PC-9 (cell line): ENCODE measurements at regions of chr12 and their contacts with region 1.

Region 1: GRCh38 chr12:124036674-124037109 is 63.7 kb downstream of the ZNF664 start:
- DNase-seq: peak in 1 of 2 experiments; percentile 37
- H3K4me3 ChIP-seq: no peak overlapping the region
- H3K27ac ChIP-seq: no peak overlapping the region
- H3K4me1 ChIP-seq: no peaks in the 10 kb centered on the region
- H3K27me3 ChIP-seq: no peaks in the 10 kb centered on the region
- CTCF ChIP-seq: peak; percentile 91

Region 2: DNA sequence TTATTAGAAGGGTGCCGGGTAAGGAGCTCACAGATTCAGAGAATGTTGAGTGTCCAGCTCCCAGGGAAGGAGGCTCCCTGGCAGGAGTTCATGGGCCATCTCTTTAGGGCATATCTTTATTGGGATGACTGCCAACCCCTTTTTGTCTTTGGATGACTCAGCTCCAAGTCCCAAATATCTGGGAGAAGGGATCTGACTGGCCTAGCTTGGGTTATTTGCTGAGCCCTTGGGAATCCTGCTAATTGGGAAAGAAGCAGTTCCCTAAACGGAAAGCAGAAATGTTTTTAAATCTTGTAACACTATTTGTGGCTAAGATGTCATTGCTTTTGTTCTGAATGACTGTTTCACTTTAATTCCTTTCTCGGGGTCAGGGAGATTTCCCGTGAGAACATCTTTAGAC is 422.2 kb before region 1 on chr12:
- CTCF ChIA-PET with region 1: no interaction called
- POLR2A ChIA-PET with region 1: no interaction called
- intact Hi-C with region 1: no loop called
- DNase-seq: no peak
- H3K4me3 ChIP-seq: no peak overlapping the region
- H3K27ac ChIP-seq: no peak overlapping the region
- H3K4me1 ChIP-seq: no peaks in the 10 kb centered on the region
- H3K27me3 ChIP-seq: no peaks in the 10 kb centered on the region
- CTCF ChIP-seq: no peak

Region 3: DNA sequence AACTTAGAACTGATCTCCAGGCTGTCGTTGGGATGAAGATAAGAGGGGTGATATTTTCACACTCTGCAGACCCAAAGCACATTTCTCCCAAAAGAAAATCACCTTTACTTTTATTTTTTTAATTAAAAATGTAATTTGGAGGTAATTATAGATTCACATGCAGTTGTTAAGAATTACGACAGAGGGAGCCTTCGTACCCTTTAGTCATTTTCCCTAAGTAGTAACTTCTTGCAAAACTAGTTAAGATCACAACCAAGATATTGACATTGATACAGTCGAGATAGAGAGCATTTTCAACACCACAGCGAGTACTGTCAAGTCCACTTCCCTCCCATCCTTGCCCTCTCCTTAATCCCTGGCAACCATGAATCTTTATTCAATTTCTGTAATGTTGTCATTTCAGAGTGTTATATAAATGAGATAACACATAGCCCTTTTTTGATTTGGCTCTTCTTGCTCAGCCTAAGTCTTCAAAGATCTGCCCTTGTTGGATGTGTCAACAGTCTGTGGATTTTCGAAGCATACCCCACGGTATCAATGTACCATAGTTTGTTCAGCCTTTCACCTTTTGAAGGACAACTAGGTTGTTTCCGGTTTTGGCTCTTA is 235.0 kb before region 1 on chr12:
- CTCF ChIA-PET with region 1: no interaction called
- POLR2A ChIA-PET with region 1: no interaction called
- intact Hi-C with region 1: loop called (anchors 2 kb)
- DNase-seq: peak in 1 of 2 experiments; percentile 46
- H3K4me3 ChIP-seq: no peak overlapping the region
- H3K27ac ChIP-seq: no peak overlapping the region
- H3K4me1 ChIP-seq: no peaks in the 10 kb centered on the region
- H3K27me3 ChIP-seq: peaks cover 20% of the 10 kb centered on the region; the same call in 1 of the 2 replicates
- CTCF ChIP-seq: peak; percentile 72

Region 4: GRCh38 chr12:124321040-124321481 is 284.4 kb after region 1 on chr12:
- CTCF ChIA-PET with region 1: no interaction called
- POLR2A ChIA-PET with region 1: no interaction called
- intact Hi-C with region 1: loop called (anchors 5 kb)
- DNase-seq: peak in 1 of 2 experiments; percentile 69
- H3K4me3 ChIP-seq: no peak overlapping the region
- H3K27ac ChIP-seq: no peak overlapping the region
- H3K4me1 ChIP-seq: no peaks in the 10 kb centered on the region
- H3K27me3 ChIP-seq: 0 out of 2 replicates have a peak, but pooled peaks cover 6% of the 10 kb centered on the region
- CTCF ChIP-seq: peak; percentile 94

Region 5: GRCh38 chr12:124772289-124773170 is 735.8 kb after region 1 on chr12:
- CTCF ChIA-PET with region 1: no interaction called
- POLR2A ChIA-PET with region 1: interaction called, 10 read pairs
- intact Hi-C with region 1: loop called (anchors 1 kb)
- DNase-seq: no peak
- H3K4me3 ChIP-seq: no peak overlapping the region; the same call in 1 of the 2 replicates
- H3K27ac ChIP-seq: no peak overlapping the region
- H3K4me1 ChIP-seq: peaks cover 25% of the 10 kb centered on the region
- H3K27me3 ChIP-seq: no peaks in the 10 kb centered on the region
- CTCF ChIP-seq: no peak

Region 6: GRCh38 chr12:124898200-124898922 is 861.7 kb after region 1 on chr12:
- CTCF ChIA-PET with region 1: no interaction called
- POLR2A ChIA-PET with region 1: no interaction called
- intact Hi-C with region 1: loop called (anchors 2 kb)
- DNase-seq: peak; percentile 62 to 69
- H3K4me3 ChIP-seq: no peak overlapping the region
- H3K27ac ChIP-seq: no peak overlapping the region
- H3K4me1 ChIP-seq: no peaks in the 10 kb centered on the region
- H3K27me3 ChIP-seq: no peaks in the 10 kb centered on the region
- CTCF ChIP-seq: peak; percentile 79